GM12878 (cell line): ENCODE measurements at regions of chr4 and their contacts with region 1.

Region 1: DNA sequence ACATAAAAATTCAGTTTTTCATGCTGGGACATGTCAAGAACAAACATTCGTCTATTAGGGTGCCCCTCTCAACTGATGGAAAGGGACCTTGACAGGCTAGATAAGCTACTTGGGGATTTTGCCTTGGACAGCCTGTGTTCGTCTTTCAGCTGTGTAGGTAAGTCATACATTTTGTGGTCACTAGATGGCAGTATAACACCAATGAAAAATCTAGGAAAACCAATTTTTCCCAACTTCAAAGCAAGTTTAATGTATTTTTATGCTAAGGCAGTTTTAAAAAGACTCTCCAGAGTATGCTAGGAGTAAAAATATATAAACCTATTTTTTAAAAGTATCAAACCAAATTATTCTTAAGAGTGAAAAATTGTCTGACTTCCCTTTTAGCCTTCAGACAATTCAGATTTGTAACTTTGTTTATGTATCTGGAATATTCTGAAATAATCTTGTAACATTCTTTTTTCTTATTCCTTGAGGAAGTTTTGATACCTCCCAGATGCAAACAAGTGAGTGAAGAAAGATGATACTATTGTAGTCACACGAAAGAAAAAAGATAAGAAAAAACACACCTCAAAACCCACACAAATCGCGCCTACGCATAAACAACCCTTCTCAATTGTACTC is 158.3 kb downstream of the CPE start:
- DNase-seq: no peak
- ATAC-seq: peak; percentile 79
- H3K4me3 ChIP-seq: no peak overlapping the region
- H3K27ac ChIP-seq: no peak overlapping the region
- H3K4me1 ChIP-seq: no peaks in the 10 kb centered on the region
- H3K27me3 ChIP-seq: no peaks in the 10 kb centered on the region; a peak in 1 of 4 replicates
- CTCF ChIP-seq: peak; percentile 45 to 67 (median 54); a peak in 5 of 6 replicates
- EP300 ChIP-seq: no peak
- POLR2A ChIP-seq: no peak
- RAD21 ChIP-seq: peak; percentile 69

Region 2: GRCh38 chr4:165700855-165701254 is 163.7 kb after region 1 on chr4:
- CTCF ChIA-PET with region 1: interaction called, 3 read pairs
- POLR2A ChIA-PET with region 1: no interaction called
- RAD21 ChIA-PET with region 1: no interaction called
- SMC1A ChIA-PET with region 1: no interaction called
- in situ Hi-C with region 1: no loop called
- intact Hi-C with region 1: loop called (anchors 5 kb)
- DNase-seq: no peak
- ATAC-seq: peak; percentile 60
- H3K4me3 ChIP-seq: no peak overlapping the region
- H3K27ac ChIP-seq: no peak overlapping the region
- H3K4me1 ChIP-seq: no peaks in the 10 kb centered on the region
- H3K27me3 ChIP-seq: no peaks in the 10 kb centered on the region
- CTCF ChIP-seq: peak; percentile 15 to 30 (median 27); a peak in 3 of 6 replicates
- EP300 ChIP-seq: no peak
- POLR2A ChIP-seq: no peak
- RAD21 ChIP-seq: 0 out of 2 replicates have a peak, but pooled peaks have one; percentile 6

Region 3: GRCh38 chr4:165953181-165953580 is 416.0 kb after region 1 on chr4:
- CTCF ChIA-PET with region 1: no interaction called
- POLR2A ChIA-PET with region 1: no interaction called
- RAD21 ChIA-PET with region 1: no interaction called
- SMC1A ChIA-PET with region 1: no interaction called
- in situ Hi-C with region 1: no loop called
- intact Hi-C with region 1: no loop called
- DNase-seq: no peak
- ATAC-seq: no peak
- H3K4me3 ChIP-seq: no peak overlapping the region
- H3K27ac ChIP-seq: no peak overlapping the region
- H3K4me1 ChIP-seq: no peaks in the 10 kb centered on the region
- H3K27me3 ChIP-seq: no peaks in the 10 kb centered on the region
- CTCF ChIP-seq: no peak
- EP300 ChIP-seq: no peak
- POLR2A ChIP-seq: no peak
- RAD21 ChIP-seq: no peak